Caco-2 (cell line): ENCODE measurements at regions of chr7 and their contacts with region 1.

Region 1: GRCh38 chr7:29113384-29114103 is 32.8 kb downstream of the CPVL start:
- DNase-seq: peak; percentile 70 to 73
- H3K4me3 ChIP-seq: no peak overlapping the region
- H3K4me3 Mint-ChIP-seq: peak overlapping the region; percentile 30
- H3K27ac Mint-ChIP-seq: peak overlapping the region; percentile 89
- H3K4me1 ChIP-seq: peaks cover 76% of the 10 kb centered on the region
- H3K4me1 Mint-ChIP-seq: peaks cover 59% of the 10 kb centered on the region
- H3K27me3 ChIP-seq: no peaks in the 10 kb centered on the region
- H3K27me3 Mint-ChIP-seq: no peaks in the 10 kb centered on the region
- CTCF ChIP-seq: peak in 1 of 2 experiments; percentile 60

Region 2: DNA sequence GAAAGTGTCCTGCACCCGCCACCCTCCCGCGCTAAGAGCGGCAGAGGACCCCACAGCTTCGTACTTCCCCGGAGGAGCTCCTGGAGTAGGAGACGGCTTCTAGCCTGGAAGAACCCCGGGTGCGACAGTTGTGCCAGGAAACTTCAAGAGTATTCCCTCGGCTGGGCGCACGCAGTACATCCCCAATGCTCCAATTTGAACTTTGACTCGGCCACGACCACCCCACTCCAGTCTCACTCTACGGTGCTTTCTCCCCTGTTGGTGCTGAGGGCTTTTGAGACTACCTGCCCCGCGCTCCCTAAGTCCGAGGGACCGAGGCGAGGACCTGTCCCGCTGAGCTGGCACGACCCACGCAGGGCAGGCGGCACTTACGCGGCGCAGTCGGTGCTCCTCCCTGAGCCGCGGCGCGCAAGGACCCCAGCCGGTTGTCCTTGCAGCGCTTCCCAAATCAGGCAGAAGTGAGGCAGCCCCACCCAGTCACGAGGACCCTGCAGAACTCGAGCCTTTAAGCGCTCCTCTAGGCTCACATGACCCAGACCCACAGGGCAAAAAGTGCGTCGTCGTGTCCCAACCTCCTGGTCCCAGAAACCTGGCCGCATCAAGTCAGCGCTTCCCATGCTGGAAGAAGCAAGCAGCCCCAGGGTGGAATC is 32.6 kb after region 1 on chr7 and contains the start of gene CPVL:
- CTCF ChIA-PET with region 1: interaction called, 3 read pairs
- POLR2A ChIA-PET with region 1: no interaction called
- intact Hi-C with region 1: loop called (anchors 1 kb)
- DNase-seq: peak; percentile 88 to 92
- H3K4me3 ChIP-seq: peak within 1 kb of the TSS; percentile 54
- H3K4me3 Mint-ChIP-seq: peak within 1 kb of the TSS; percentile 98
- H3K27ac Mint-ChIP-seq: peak within 1 kb of the TSS; percentile 91
- H3K4me1 ChIP-seq: peaks cover 27% of the 10 kb centered on the region
- H3K4me1 Mint-ChIP-seq: peaks cover 20% of the 10 kb centered on the region
- H3K27me3 ChIP-seq: no peaks in the 10 kb centered on the region
- H3K27me3 Mint-ChIP-seq: no peaks in the 10 kb centered on the region
- CTCF ChIP-seq: no peak
- total RNA-seq, gene CPVL: 108 and 109 TPM in 2 replicates

Region 3: DNA sequence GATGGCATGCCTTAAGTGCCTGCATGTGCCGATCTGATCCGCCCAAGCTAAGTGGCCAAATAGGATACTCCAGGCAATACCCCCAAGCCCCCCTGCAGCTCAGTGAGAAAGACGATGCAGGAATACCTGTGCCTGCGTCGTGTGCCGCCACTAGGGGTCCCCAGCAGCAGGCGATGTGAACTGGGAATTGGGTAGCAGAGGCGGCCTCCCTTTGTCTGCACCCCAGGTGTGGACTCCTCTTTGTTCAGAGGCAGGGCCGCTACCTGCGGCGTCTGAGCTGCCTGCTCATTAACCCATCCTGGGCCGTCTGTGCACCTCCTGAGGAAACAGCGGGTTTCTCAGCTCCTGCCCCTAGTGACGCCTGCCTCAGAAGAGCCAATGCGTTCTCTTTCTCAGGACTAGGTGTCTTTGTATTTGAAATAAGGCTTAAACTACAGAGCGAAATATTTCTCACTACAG is 76.2 kb after region 1 on chr7:
- CTCF ChIA-PET with region 1: interaction called, 29 read pairs
- POLR2A ChIA-PET with region 1: no interaction called
- intact Hi-C with region 1: loop called (anchors 2 kb)
- DNase-seq: peak; percentile 87 to 88
- H3K4me3 ChIP-seq: no peak overlapping the region
- H3K4me3 Mint-ChIP-seq: peak overlapping the region; percentile 60
- H3K27ac Mint-ChIP-seq: peak overlapping the region; percentile 18
- H3K4me1 ChIP-seq: peaks cover 26% of the 10 kb centered on the region
- H3K4me1 Mint-ChIP-seq: peaks cover 19% of the 10 kb centered on the region
- H3K27me3 ChIP-seq: no peaks in the 10 kb centered on the region
- H3K27me3 Mint-ChIP-seq: no peaks in the 10 kb centered on the region
- CTCF ChIP-seq: peak; percentile 91 to 96

Region 4: DNA sequence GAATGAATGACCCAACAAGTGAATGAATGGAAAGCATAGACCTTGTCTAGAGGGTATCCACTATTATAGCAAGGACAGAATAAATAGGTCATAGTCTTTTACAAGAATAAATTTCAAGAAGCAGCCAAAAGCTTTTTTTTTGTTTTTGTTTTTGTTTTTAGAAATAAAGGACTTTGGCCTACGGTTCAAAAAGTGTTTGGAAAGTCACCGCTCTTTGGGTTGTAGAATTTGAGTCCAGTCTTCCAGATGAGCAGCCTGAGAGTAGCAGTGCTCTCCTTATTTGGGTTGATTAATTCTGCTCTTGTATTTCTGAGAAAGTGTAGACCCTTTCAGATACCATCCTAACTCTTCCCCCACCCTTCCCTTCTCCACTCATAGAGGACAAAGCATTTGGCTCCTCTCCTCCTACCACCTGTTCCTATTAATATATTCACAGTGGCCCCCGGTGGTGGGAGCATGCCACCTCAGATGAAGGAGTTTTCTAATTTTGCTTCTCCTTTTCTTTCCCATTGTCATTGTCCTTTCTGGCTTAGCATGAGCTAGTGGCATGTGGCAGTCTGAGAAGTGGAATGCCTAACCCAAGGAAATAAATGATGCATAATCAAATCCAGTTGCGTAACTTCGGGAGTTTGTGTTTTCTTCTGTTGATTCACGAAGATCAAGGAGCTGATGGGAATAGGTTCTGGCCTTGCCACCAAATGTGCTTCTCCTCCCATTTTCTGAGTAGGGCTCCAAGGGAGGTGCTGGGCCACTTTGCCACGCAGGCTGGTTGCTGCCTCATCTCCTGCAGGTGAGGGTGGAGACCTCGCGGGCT is 195.7 kb after region 1 on chr7:
- CTCF ChIA-PET with region 1: interaction called, 3 read pairs
- POLR2A ChIA-PET with region 1: no interaction called
- intact Hi-C with region 1: loop called (anchors 1 kb)
- DNase-seq: peak; percentile 50 to 64
- H3K4me3 ChIP-seq: no peak overlapping the region
- H3K4me3 Mint-ChIP-seq: no peak overlapping the region
- H3K27ac Mint-ChIP-seq: no peak overlapping the region
- H3K4me1 ChIP-seq: peaks cover 45% of the 10 kb centered on the region
- H3K4me1 Mint-ChIP-seq: peaks cover 41% of the 10 kb centered on the region
- H3K27me3 ChIP-seq: no peaks in the 10 kb centered on the region
- H3K27me3 Mint-ChIP-seq: no peaks in the 10 kb centered on the region
- CTCF ChIP-seq: peak; percentile 59 to 70

Region 5: GRCh38 chr7:29345600-29345999 is 232.1 kb after region 1 on chr7:
- CTCF ChIA-PET with region 1: interaction called, 19 read pairs
- POLR2A ChIA-PET with region 1: no interaction called
- intact Hi-C with region 1: loop called (anchors 1 kb)
- DNase-seq: peak; percentile 63 to 64
- H3K4me3 ChIP-seq: no peak overlapping the region
- H3K4me3 Mint-ChIP-seq: no peak overlapping the region
- H3K27ac Mint-ChIP-seq: no peak overlapping the region
- H3K4me1 ChIP-seq: no peaks in the 10 kb centered on the region; the same call in 1 of the 2 replicates
- H3K4me1 Mint-ChIP-seq: no peaks in the 10 kb centered on the region
- H3K27me3 ChIP-seq: no peaks in the 10 kb centered on the region
- H3K27me3 Mint-ChIP-seq: no peaks in the 10 kb centered on the region
- CTCF ChIP-seq: peak; percentile 55 to 81

Region 6: DNA sequence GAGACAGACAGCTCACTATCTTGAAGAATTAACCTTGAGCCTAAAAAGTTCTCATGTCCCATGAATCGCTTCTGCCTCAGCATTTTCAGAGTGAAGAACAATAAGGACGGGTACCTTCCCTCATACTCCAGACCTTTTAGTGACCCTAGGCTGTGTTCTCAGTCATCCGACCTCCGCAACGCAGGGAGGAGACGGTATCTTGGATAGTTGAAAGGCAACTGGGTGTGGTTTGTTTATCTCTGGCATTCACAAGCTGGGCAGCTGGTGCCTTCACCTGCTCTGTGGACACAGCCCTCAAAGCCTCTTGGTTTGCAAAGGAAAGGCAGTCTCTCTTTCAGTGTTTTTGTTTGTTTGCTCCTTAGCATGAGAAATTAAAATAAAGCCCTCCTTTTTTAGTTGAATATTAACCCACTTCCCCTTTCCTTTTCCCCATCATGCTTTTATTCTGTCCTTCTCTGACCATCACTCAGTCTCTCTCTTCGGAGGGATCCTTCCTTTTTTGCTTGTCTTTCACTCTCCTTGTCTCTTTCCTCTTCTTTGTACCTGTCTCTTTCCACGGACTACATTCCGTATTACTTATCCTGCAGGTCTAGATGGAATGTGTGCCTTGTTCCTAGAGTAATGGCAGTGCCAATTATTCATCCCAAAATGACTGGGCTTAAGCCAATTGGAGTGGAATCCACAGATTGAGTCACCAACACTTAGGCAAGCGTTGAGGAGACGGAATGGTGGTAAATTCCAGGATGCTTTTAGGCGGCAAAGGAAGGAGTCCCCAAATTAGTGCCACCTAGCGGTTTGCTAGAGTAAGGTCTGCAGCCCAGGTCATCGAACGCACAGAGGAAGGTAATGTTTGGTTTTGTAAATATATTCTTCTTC is 495.9 kb after region 1 on chr7:
- CTCF ChIA-PET with region 1: no interaction called
- POLR2A ChIA-PET with region 1: no interaction called
- intact Hi-C with region 1: loop called (anchors 10 kb)
- DNase-seq: peak; percentile 71 to 82
- H3K4me3 ChIP-seq: 0 out of 2 replicates have a peak overlapping the region, but pooled peaks have one; percentile 10
- H3K4me3 Mint-ChIP-seq: peak overlapping the region; percentile 73
- H3K27ac Mint-ChIP-seq: peak overlapping the region; percentile 84
- H3K4me1 ChIP-seq: peaks cover 46% of the 10 kb centered on the region
- H3K4me1 Mint-ChIP-seq: peaks cover 44% of the 10 kb centered on the region
- H3K27me3 ChIP-seq: no peaks in the 10 kb centered on the region
- H3K27me3 Mint-ChIP-seq: no peaks in the 10 kb centered on the region
- CTCF ChIP-seq: peak; percentile 75